PC-9 (cell line): ENCODE measurements at regions of chr17 and their contacts with region 1.

Region 1: GRCh38 chr17:8057691-8058114 is 18.8 kb downstream of the ALOX15B start:
- DNase-seq: peak; percentile 61 to 63
- H3K4me3 ChIP-seq: no peak overlapping the region; the same call in 1 of the 2 replicates
- H3K27ac ChIP-seq: no peak overlapping the region
- H3K4me1 ChIP-seq: peaks cover 28% of the 10 kb centered on the region
- H3K27me3 ChIP-seq: peaks cover 5% of the 10 kb centered on the region
- CTCF ChIP-seq: peak; percentile 74

Region 2: DNA sequence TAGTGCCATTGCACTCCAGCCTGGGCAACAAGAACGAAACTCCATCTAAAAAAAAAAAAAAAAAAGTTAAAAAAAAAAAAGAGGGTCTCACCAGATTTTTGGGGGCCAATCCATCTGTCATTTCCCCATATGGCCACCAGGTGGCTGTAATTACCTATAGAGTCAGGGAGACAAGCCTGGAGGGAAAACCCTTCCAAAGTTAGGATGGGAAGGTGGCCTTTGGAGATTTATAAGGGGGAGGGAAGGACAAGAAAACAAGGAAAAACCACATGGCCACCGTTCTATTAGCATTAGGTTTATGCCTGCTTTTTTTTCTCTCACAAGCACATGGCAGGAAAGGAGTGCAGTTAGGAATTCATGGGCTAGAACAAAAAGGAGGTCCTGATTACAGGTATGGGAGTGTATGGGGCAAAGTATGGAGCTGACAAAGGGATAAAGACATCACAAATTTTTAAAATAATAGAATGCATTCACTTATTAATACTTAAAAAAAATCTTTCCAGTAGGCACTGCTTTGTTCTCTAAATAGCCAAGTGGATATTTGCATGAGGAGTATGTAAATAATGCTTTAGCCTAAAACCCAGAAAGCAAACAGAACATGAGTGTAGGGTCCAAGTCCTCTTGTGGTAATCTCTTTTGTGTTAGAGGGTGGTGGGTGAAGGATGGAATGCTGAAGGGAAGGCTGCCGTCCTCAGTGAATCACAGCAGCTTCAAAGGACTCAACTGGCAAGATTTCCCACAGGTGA is 194.8 kb before region 1 on chr17:
- CTCF ChIA-PET with region 1: interaction called, 17 read pairs
- POLR2A ChIA-PET with region 1: no interaction called
- intact Hi-C with region 1: loop called (anchors 1 kb)
- DNase-seq: peak in 1 of 2 experiments; percentile 49
- H3K4me3 ChIP-seq: no peak overlapping the region
- H3K27ac ChIP-seq: no peak overlapping the region
- H3K4me1 ChIP-seq: peaks cover 7% of the 10 kb centered on the region; the same call in 1 of the 2 replicates
- H3K27me3 ChIP-seq: no peaks in the 10 kb centered on the region
- CTCF ChIP-seq: peak; percentile 87

Region 3: DNA sequence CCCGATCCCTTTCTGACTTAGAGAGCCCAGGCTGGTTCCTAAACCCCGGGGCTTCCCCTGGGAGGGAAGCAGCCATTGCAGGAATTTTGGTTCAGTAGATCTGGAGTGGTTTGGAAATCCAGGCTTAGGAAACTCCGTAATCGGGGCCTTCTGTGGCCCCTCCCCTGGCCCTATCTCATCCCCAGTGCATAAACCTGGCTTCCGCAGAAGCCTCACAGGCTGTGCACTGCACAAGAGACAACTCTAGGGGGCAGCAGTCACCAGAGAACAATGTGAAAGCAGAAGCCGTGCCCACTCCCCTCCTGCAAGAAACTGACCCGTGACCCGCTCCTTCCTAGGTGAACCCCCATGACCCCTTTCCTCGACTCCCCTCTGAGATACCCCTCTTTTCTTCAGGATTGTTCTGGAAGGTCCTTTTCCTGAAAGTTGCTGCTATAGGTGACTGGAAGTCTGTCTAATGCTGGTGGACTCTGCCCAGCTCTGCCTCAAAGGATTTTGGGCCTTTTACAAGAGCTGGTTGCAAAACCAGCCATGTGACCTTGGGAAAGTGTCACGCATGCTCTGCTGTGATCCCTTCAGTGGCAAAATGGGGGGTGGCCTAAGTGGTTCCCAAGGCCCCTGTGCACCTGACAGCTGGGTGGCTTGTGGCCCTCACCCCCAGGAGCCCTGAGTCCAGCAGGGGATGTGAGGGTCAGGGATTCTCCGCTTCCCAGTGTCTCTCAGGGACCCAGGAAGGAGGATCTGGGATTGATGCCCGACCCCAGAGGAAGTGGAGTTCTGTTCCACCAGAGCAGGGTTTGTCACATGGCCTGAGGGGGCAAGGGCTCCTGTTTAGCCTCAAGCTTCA is 40.8 kb before region 1 on chr17:
- CTCF ChIA-PET with region 1: no interaction called
- POLR2A ChIA-PET with region 1: no interaction called
- intact Hi-C with region 1: loop called (anchors 1 kb)
- DNase-seq: peak; percentile 35 to 68
- H3K4me3 ChIP-seq: peak overlapping the region; percentile 50
- H3K27ac ChIP-seq: no peak overlapping the region
- H3K4me1 ChIP-seq: no peaks in the 10 kb centered on the region
- H3K27me3 ChIP-seq: no peaks in the 10 kb centered on the region
- CTCF ChIP-seq: peak; percentile 70

Region 4: GRCh38 chr17:8300627-8301242 is 243.0 kb after region 1 on chr17:
- CTCF ChIA-PET with region 1: interaction called, 4 read pairs
- POLR2A ChIA-PET with region 1: no interaction called
- intact Hi-C with region 1: loop called (anchors 5 kb)
- DNase-seq: peak; percentile 42 to 58
- H3K4me3 ChIP-seq: no peak overlapping the region
- H3K27ac ChIP-seq: no peak overlapping the region
- H3K4me1 ChIP-seq: no peaks in the 10 kb centered on the region
- H3K27me3 ChIP-seq: no peaks in the 10 kb centered on the region
- CTCF ChIP-seq: peak; percentile 82

Region 5: GRCh38 chr17:8785547-8786413 is 728.1 kb after region 1 on chr17:
- CTCF ChIA-PET with region 1: no interaction called
- POLR2A ChIA-PET with region 1: no interaction called
- intact Hi-C with region 1: loop called (anchors 1 kb)
- DNase-seq: peak in 1 of 2 experiments; percentile 70
- H3K4me3 ChIP-seq: no peak overlapping the region
- H3K27ac ChIP-seq: no peak overlapping the region
- H3K4me1 ChIP-seq: no peaks in the 10 kb centered on the region
- H3K27me3 ChIP-seq: peaks cover 37% of the 10 kb centered on the region
- CTCF ChIP-seq: peak; percentile 71